ENCODE measurements at regions of chr1 and their contacts with region 1.

Region 1: DNA sequence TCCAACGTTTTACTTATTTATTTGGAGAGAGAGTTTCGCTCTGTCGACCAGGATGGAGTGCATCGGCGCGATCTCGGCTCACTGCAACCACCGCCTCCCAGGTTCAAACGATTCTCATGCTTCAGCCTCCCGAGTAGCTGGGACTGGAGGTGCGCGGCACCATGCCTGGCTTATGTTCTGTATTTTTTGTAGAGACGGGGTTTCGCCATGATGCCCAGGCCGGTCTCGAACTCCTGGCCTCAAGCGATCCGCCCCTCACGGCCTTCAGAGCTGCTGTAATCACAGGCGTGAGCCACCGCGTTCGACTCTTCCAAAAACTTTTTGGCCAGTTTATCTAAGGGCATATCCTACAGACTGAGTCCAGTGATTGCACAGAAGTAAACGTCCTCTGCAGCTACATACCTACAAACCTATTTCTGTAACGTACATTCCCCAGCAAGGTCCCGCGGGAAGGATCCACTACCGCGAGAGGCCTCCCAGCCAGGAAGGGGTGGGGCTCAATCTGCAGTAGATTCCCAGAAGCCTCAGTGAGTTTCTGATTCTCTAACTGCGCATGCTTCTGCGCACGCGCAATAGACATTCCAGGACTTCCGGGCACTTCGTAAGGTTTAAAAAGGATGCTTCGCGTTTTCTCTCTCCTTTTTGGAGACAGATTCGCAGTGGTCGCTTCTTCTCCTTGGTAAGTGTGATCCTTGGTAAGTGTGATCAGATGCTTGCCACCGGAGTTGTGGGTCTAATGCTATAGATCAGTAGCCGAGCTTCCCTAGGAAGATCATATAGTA is at the start of gene RCC1:
- DNase-seq: peak; percentile 78 to 98 (median 96)
- ATAC-seq: peak; percentile 97
- H3K4me3 ChIP-seq: peak within 1 kb of the TSS; percentile 79
- H3K4me3 Mint-ChIP-seq: peak within 1 kb of the TSS; percentile 94 to 100 (median 99)
- H3K27ac ChIP-seq: peak within 1 kb of the TSS; percentile 88
- H3K27ac Mint-ChIP-seq: peak within 1 kb of the TSS; percentile 96 to 100 (median 99)
- H3K4me1 ChIP-seq: peaks cover 29 to 36% of the 10 kb centered on the region in 2 donors
- H3K4me1 Mint-ChIP-seq: peaks cover 29 to 48% (median 41%) of the 10 kb centered on the region in 7 donors
- H3K27me3 ChIP-seq: no peaks in the 10 kb centered on the region
- H3K27me3 Mint-ChIP-seq: peaks cover 0 to 3% (median 0%) of the 10 kb centered on the region in 5 donors
- total RNA-seq, gene RCC1: 9.8 to 60.7 (median 19.7) TPM

Region 2: DNA sequence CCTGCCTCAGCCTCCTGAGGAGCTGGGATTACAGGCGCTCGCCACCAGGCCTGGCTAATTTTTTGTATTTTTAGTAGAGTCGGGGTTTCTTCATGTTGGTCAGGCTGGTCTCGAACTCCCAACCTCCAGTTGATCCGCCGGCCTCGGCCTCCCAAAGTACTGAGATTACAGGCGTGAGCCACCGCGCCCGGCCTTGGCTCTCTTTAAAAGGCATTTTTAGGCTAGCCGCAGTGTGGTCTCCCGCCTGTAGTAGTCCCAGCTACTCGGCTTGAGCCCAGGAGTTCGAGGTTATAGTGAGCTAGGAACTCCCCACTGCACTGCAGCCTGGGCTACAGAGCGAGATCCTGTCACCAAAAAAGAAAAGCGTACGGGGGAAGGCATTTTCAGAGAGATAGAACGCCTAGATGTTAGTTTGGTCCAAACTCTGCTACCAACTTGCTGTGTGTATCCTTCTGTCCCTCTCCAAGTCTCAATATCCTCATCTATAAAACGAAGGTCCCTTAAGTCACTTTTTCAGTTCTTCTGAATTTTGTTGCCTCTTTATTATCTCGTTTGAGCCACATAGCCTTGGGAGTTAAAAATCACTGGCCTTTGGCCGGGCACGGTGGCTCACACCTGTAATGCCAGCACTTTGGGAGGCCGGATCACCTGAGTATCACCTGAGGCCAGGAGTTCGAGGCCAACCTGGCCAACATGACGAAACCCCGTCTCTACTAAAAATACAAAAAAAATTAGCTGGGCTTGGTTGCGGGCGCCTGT is 176.0 kb before region 1 on chr1:
- CTCF ChIA-PET with region 1: no interaction called
- POLR2A ChIA-PET with region 1: interaction called, 4 read pairs
- intact Hi-C with region 1: loop called in 1 of 2 experiments (anchors 1 kb)
- DNase-seq: peak in 2 of 9 donors; percentile 32 to 48
- ATAC-seq: peak; percentile 14
- H3K4me3 ChIP-seq: peak overlapping the region; percentile 59
- H3K4me3 Mint-ChIP-seq: peak overlapping the region; percentile 89 to 98 (median 92)
- H3K27ac ChIP-seq: peak overlapping the region; percentile 86
- H3K27ac Mint-ChIP-seq: peak overlapping the region; percentile 92 to 100 (median 98)
- H3K4me1 ChIP-seq: peaks cover 13 to 14% of the 10 kb centered on the region in 2 donors
- H3K4me1 Mint-ChIP-seq: peaks cover 20 to 40% (median 39%) of the 10 kb centered on the region in 7 donors
- H3K27me3 ChIP-seq: no peaks in the 10 kb centered on the region
- H3K27me3 Mint-ChIP-seq: peaks cover 0 to 3% (median 0%) of the 10 kb centered on the region in 5 donors

Region 3: GRCh38 chr1:28449904-28450303 is 55.7 kb before region 1 on chr1:
- CTCF ChIA-PET with region 1: no interaction called
- POLR2A ChIA-PET with region 1: no interaction called
- intact Hi-C with region 1: loop called in 1 of 2 experiments (anchors 2 kb)
- DNase-seq: peak in 6 of 9 donors; percentile 8 to 56 (median 32)
- ATAC-seq: peak; percentile 67
- H3K4me3 ChIP-seq: no peak overlapping the region
- H3K4me3 Mint-ChIP-seq: peak overlapping the region in 3 of 10 donors; percentile 16 to 34 (median 30)
- H3K27ac ChIP-seq: no peak overlapping the region
- H3K27ac Mint-ChIP-seq: peak overlapping the region in 7 of 9 donors; percentile 27 to 87 (median 47)
- H3K4me1 ChIP-seq: peaks cover 0 to 4% of the 10 kb centered on the region in 2 donors
- H3K4me1 Mint-ChIP-seq: peaks cover 11 to 42% (median 23%) of the 10 kb centered on the region in 7 donors
- H3K27me3 ChIP-seq: no peaks in the 10 kb centered on the region
- H3K27me3 Mint-ChIP-seq: no peaks in the 10 kb centered on the region

Region 4: GRCh38 chr1:28552758-28553663 is 47.4 kb after region 1 on chr1 and contains the start of gene TRNAU1AP:
- CTCF ChIA-PET with region 1: no interaction called
- POLR2A ChIA-PET with region 1: interaction called, 12 read pairs
- intact Hi-C with region 1: loop called (anchors 1 kb)
- DNase-seq: peak; percentile 92 to 98 (median 97)
- ATAC-seq: peak; percentile 98
- H3K4me3 ChIP-seq: peak within 1 kb of the TSS; percentile 95
- H3K4me3 Mint-ChIP-seq: peak within 1 kb of the TSS; percentile 94 to 99 (median 98)
- H3K27ac ChIP-seq: peak within 1 kb of the TSS; percentile 81
- H3K27ac Mint-ChIP-seq: peak within 1 kb of the TSS; percentile 94 to 99 (median 98)
- H3K4me1 ChIP-seq: peaks cover 0 to 15% of the 10 kb centered on the region in 2 donors
- H3K4me1 Mint-ChIP-seq: peaks cover 10 to 26% (median 19%) of the 10 kb centered on the region in 7 donors
- H3K27me3 ChIP-seq: no peaks in the 10 kb centered on the region
- H3K27me3 Mint-ChIP-seq: no peaks in the 10 kb centered on the region
- total RNA-seq, gene TRNAU1AP: 27.6 to 52.5 (median 40.9) TPM

Region 5: DNA sequence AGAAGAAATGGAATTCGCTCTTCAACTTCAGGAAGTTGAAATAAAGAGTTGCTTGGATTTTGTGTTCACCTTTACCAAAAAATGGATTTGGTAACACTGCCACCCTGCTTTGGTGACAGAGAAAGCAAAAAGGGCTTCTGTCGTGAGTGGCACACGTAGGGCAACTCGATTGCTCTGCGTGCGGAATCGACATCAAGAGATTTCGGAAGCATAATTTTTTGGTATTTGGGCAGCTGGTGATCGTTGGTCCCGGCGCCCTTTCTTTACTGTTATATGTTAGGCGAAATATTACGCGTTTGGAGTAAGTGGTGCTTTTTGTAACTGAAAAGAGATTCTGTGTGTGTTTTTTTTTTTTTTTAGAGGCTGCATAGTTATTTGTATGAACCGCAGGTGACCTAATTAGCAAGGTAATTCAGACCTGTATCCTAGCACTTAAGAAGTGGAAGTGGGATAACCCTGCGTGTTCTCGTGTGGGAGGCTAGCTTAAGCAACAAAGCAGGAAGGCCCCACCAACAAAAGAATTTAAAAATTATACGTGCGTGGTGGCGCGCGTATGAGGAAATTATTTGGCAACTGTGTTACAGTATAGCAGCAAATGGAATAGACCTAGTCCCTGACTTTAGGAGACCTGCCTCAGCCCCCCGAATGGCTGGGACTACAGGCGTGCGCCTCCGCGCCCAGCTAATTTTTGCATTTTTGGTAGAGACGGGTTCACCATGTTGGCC is 143.0 kb after region 1 on chr1 and contains the start of gene RNU11:
- CTCF ChIA-PET with region 1: no interaction called
- POLR2A ChIA-PET with region 1: interaction called, 41 read pairs
- intact Hi-C with region 1: loop called (anchors 1 kb)
- DNase-seq: peak in 8 of 9 donors; percentile 67 to 97 (median 91)
- ATAC-seq: peak; percentile 86
- H3K4me3 ChIP-seq: peak within 1 kb of the TSS; percentile 60
- H3K4me3 Mint-ChIP-seq: peak within 1 kb of the TSS; percentile 70 to 96 (median 90)
- H3K27ac ChIP-seq: peak within 1 kb of the TSS; percentile 93
- H3K27ac Mint-ChIP-seq: peak within 1 kb of the TSS; percentile 97 to 100 (median 99)
- H3K4me1 ChIP-seq: peaks cover 25 to 27% of the 10 kb centered on the region in 2 donors
- H3K4me1 Mint-ChIP-seq: peaks cover 14 to 39% (median 31%) of the 10 kb centered on the region in 7 donors
- H3K27me3 ChIP-seq: no peaks in the 10 kb centered on the region
- H3K27me3 Mint-ChIP-seq: no peaks in the 10 kb centered on the region
- total RNA-seq, gene RNU11: not detected

Region 6: DNA sequence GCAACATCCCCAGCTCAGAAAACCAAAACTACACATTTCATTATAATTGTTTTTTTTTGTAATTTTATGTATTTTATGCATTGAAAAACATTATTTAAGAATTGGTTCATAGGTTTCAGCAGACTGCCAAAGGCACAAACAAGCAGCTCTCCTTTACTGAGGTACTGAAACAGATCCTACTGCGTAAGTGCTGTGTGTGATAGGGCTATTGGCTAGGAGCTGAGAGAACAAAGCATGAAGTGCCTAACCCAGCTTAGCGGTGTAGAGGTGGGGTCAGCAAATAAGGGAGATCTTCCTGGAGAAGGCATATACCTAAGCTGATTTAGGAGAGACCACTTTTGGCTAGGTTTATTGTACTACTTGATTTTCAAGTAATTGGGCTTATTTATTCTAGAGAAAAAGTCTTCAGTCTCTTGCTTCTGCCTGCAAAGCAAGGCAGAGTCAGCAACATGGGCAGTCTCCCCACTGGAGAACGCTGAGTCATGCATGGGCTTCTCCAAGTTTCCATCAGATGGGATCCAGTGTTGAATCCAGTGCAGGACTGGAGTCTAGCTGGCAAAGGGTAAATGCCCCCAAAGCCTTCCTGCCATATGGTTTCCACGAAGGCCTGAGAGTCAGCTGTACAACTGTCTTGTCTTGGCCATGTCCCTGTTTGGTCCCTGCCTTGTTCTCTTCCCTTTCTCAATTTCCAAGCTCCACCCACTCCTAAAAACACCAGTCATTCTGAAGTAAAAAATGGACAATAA is 213.2 kb after region 1 on chr1:
- CTCF ChIA-PET with region 1: no interaction called
- POLR2A ChIA-PET with region 1: no interaction called
- intact Hi-C with region 1: no loop called
- DNase-seq: no peak
- ATAC-seq: no peak
- H3K4me3 ChIP-seq: no peak overlapping the region
- H3K4me3 Mint-ChIP-seq: no peak overlapping the region
- H3K27ac ChIP-seq: no peak overlapping the region
- H3K27ac Mint-ChIP-seq: peak overlapping the region in 5 of 9 donors; percentile 9 to 76 (median 64)
- H3K4me1 ChIP-seq: no peaks in the 10 kb centered on the region
- H3K4me1 Mint-ChIP-seq: peaks cover 0 to 5% (median 0%) of the 10 kb centered on the region in 7 donors
- H3K27me3 ChIP-seq: no peaks in the 10 kb centered on the region
- H3K27me3 Mint-ChIP-seq: no peaks in the 10 kb centered on the region

Region 7: DNA sequence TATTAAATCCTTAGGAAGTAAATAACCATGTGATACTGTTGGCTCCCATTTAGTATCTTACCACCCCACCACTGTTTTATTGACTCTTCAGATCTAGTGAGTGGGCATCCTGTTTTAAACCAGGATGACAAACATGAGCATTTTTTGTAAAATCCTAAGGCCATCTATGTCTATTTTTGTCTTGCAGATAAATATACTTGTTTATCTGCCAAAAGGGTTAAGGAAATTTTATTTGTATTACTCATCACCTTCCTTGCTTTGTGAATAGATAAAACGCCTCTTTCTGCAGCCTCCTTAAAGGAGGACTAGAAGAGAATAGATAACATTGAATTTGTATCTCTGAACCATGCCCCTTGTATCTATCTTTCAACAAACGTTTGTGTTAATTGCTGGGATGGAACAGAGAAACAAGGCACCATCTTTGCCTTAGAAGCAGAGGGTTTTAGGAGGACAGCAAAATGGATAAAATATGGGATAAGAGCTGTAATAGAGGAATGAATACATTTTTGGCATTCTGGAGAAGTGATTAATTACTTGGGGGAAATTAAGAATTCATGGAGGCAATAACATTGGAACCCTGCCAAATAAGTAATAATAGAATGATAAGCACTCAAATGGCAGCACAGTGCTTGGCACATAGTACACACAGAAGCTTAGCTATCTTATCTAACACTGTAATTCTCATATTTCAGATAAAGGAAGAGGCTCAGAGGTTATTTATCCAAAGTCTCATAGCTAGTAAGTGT is 245.9 kb after region 1 on chr1:
- CTCF ChIA-PET with region 1: no interaction called
- POLR2A ChIA-PET with region 1: no interaction called
- intact Hi-C with region 1: no loop called
- DNase-seq: no peak
- ATAC-seq: no peak
- H3K4me3 ChIP-seq: no peak overlapping the region
- H3K4me3 Mint-ChIP-seq: peak overlapping the region in 6 of 10 donors; percentile 7 to 68 (median 38)
- H3K27ac ChIP-seq: no peak overlapping the region
- H3K27ac Mint-ChIP-seq: peak overlapping the region in 8 of 9 donors; percentile 3 to 83 (median 54)
- H3K4me1 ChIP-seq: peaks cover 43 to 55% of the 10 kb centered on the region in 2 donors
- H3K4me1 Mint-ChIP-seq: peaks cover 25 to 66% (median 40%) of the 10 kb centered on the region in 7 donors
- H3K27me3 ChIP-seq: no peaks in the 10 kb centered on the region
- H3K27me3 Mint-ChIP-seq: no peaks in the 10 kb centered on the region

Region 8: DNA sequence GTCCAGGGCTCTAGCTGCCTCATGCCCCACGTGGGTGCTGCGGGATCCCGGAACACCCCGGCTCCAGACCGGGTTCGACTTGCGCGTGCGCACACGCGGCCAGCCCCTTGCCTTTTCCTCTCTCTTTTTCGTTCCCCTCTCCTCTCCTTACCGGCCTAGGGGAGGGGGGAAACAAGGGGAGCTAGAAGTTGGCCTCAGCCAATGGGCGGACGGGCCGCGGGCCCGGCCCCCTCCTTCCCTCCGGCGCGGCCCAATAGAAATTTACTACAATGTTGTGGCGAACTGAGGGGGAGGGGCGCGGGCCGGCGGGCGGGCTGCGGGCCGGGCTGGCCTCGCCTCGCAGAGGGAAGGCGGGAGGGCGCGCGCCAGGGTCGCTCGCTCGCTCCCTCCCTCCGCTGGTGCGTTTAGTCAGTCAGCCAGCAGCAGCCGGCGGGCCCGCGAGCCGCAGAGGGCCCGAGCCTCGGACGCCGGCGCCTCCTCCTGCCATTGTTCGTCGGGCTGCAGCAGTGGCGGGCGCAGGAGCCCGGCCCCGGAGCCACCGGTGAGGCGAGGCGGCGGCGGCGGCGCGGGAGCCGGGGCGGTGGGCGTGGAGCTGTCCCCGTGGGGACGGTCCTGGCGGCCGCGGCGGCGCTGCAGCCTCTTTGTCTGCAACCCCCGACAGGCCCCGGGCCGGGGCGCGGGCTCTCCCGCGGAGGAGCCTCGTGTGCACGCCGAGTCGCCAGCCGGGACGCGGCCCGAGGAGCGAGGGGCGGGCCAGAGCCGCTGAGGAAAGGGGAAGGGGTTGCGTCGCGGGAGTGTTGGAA is 408.8 kb after region 1 on chr1 and contains the start of gene EPB41:
- CTCF ChIA-PET with region 1: no interaction called
- POLR2A ChIA-PET with region 1: no interaction called
- intact Hi-C with region 1: loop called in 1 of 2 experiments (anchors 1 kb)
- DNase-seq: peak; percentile 81 to 94 (median 87)
- ATAC-seq: peak; percentile 94
- H3K4me3 ChIP-seq: peak within 1 kb of the TSS; percentile 91
- H3K4me3 Mint-ChIP-seq: peak within 1 kb of the TSS; percentile 95 to 100 (median 99)
- H3K27ac ChIP-seq: peak within 1 kb of the TSS; percentile 73
- H3K27ac Mint-ChIP-seq: peak within 1 kb of the TSS; percentile 87 to 97 (median 96)
- H3K4me1 ChIP-seq: peaks cover 34 to 37% of the 10 kb centered on the region in 2 donors
- H3K4me1 Mint-ChIP-seq: peaks cover 32 to 51% (median 39%) of the 10 kb centered on the region in 7 donors
- H3K27me3 ChIP-seq: no peaks in the 10 kb centered on the region
- H3K27me3 Mint-ChIP-seq: no peaks in the 10 kb centered on the region
- total RNA-seq, gene EPB41: 150 to 325 (median 175) TPM

Region 9: DNA sequence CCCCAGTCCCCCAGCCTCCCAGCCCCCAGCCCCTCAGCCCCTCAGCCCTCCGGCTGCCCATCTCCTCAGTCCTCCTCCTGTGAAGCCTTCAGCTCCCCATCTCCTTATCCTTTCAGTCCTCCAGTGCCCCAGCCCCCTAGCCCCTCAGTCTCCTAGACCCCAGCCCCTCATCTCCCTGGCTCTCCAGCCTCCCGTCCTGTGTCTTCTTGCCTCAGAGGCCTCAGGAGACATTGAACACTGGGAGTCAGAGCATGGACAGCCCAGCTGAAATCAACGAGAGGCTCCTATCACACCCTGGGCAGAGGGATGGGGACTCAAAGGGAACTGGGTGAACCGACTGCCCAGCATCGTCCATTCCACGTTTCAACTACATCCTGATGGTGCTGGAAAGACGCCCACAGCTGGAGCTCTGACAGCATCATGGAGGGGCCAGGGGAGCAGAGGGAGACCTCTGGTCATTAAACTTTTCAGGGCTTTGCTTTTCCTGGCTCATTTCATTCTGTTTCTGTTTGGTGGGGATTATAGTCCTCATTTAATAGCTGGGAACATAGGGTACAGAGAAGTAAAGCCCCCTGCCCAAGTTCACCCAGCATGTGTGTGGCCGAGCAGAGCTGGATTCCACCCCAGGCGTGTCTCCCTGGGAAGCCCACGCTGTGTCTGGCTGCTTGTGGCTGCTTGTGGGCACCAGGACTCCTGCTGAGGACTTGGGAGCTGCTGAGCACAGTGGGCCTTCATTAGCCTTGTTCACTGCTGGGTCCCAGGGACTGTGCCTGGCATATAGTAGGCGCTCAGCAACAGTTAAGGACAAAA is 1127.4 kb after region 1 on chr1:
- CTCF ChIA-PET with region 1: no interaction called
- POLR2A ChIA-PET with region 1: no interaction called
- intact Hi-C with region 1: no loop called
- DNase-seq: no peak
- ATAC-seq: no peak
- H3K4me3 ChIP-seq: no peak overlapping the region
- H3K4me3 Mint-ChIP-seq: no peak overlapping the region
- H3K27ac ChIP-seq: no peak overlapping the region
- H3K27ac Mint-ChIP-seq: peak overlapping the region in 2 of 9 donors; percentile 12 to 53
- H3K4me1 ChIP-seq: no peaks in the 10 kb centered on the region
- H3K4me1 Mint-ChIP-seq: peaks cover 0 to 1% (median 0%) of the 10 kb centered on the region in 7 donors
- H3K27me3 ChIP-seq: no peaks in the 10 kb centered on the region
- H3K27me3 Mint-ChIP-seq: peaks cover 9 to 46% (median 14%) of the 10 kb centered on the region in 5 donors

Measured in naive thymus-derived CD4-positive, alpha-beta T cell (primary cell).